Aorta (tissue), 5 donors: ENCODE measurements at regions of chr4 and their contacts with region 1.

Region 1: GRCh38 chr4:184448821-184449220 is 25.5 kb downstream of the IRF2 start:
- DNase-seq: peak in 1 of 2 donors; percentile 58
- ATAC-seq: peak; percentile 82
- H3K4me3 ChIP-seq: no peak overlapping the region
- H3K27ac ChIP-seq: no peak overlapping the region
- H3K4me1 ChIP-seq: no peaks in the 10 kb centered on the region
- H3K27me3 ChIP-seq: no peaks in the 10 kb centered on the region

Region 2: DNA sequence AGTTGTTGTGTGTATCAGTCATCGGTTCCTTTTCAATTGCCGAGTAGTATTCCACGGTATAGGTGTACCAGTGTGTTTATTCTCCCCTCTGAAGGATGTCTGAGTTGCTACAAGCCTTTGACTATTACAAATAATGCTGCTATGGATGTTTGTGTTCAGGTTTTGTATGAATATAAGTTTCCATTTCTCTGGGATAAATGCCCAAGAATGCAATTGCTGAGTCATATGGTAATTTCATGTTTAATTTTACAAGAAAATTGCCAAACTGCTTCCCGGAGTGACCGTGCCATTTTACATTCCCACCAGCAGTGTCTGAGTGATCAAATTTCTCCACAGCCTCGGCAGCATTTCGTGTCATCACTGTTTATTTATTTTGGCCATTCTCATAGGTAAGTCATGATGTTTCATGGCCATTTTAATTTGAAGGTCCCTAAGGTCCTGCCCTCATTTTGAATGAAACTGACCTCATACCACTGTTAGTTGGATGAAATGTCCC is 48.4 kb before region 1 on chr4:
- intact Hi-C with region 1: loop called in 1 of 2 experiments (anchors 5 kb)
- DNase-seq: peak in 1 of 2 donors; percentile 71
- ATAC-seq: peak; percentile 75
- H3K4me3 ChIP-seq: no peak overlapping the region
- H3K27ac ChIP-seq: no peak overlapping the region
- H3K4me1 ChIP-seq: peaks cover 0 to 8% of the 10 kb centered on the region in 2 donors
- H3K27me3 ChIP-seq: no peaks in the 10 kb centered on the region

Region 3: GRCh38 chr4:185127021-185127925 is 678.5 kb after region 1 on chr4:
- intact Hi-C with region 1: no loop called
- DNase-seq: peak; percentile 55 to 78
- ATAC-seq: peak; percentile 59
- H3K4me3 ChIP-seq: peak overlapping the region; percentile 51 to 55
- H3K27ac ChIP-seq: no peak overlapping the region
- H3K4me1 ChIP-seq: no peaks in the 10 kb centered on the region
- H3K27me3 ChIP-seq: no peaks in the 10 kb centered on the region